ENCODE measurements at regions of chr9 and their contacts with region 1.

Region 1: DNA sequence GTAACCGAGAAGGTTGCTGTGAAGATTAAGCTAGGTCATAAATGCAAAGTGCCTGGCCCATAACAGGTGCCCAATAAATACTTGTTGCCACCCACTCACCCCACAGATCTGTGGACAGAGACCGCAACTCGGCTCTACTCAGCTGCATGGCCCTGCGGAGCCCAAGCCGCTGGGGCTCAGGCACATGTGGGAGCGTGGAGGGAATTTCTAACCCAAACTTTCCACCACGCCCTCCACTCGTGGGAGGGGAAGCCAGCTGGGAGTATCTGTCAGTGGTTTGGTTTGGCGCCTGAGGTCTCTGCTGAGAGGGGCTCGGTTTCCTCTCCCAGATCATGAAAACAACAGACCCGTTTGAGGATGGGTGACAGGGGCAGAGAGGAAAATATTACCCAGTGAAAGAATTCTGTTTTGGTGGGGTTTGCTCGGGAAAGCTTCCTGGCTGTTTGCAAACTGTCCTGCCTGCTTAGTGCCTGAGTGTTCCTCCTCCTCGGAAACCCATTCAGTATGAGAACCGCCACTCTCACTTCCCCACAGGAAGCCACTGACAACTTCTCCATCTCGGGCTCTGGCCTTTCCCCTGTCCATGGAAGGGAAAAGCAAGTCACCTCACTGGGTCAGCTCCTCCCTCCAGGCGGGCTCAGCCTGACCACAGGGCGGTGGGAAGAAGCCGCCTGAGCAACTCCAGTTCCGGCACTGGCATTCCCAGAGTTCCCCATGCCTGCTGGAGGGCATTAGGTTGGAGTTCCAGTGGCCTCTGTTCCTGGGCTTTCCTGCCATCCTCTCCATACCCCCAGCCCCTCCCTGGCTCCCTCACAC is 60.1 kb downstream of the RGS3 start:
- DNase-seq: peak; percentile 55
- H3K4me3 Mint-ChIP-seq: peak overlapping the region; percentile 10
- H3K27ac Mint-ChIP-seq: peak overlapping the region; percentile 13
- H3K4me1 Mint-ChIP-seq: peaks cover 55% of the 10 kb centered on the region
- H3K27me3 Mint-ChIP-seq: no peaks in the 10 kb centered on the region

Region 2: DNA sequence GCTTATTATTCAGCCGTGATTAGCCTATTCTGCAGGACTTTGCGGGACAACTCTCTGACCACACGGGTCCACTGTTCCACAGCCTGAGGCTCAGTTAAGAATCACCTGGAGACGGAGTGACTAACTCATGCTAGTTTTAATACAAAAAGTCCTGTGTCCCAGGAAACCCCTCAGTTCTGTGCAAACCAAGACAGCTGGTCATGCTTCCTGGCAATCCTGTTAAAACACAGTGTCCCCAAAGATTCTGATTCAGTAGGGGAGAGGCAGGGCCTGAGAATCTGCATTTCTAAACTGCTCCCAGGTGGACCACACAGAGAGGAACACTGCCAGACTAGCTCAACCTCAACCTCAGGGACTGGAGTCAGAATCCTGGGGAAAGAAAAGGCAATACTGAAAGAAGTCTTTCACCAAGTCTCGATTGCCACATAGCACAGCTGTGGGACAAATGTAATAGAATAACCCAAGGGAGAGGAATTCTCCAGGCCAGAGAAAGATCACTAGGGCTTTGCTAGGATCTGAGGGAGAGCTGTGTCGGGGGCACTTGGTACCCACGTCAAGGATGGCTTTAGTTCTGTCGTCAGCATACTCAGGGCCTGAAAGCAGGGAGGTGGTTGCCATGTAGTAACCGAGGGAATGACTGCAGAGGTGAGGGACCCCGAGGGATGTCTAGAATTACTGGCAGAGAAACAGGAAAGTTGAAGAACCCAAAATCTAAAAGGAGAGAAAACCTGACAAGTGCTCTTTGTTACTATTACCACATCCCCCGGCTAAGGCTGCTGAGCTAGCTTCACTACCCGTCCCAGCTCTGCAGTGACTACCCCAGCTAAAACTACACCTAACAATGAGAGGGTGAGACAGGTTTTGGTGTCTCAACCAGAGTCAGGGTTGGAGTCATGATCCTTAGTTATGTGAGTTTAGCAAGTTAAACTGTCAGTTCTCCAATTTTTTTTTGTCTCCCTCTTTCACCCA is 1357.2 kb before region 1 on chr9:
- CTCF ChIA-PET with region 1: no interaction called
- intact Hi-C with region 1: no loop called
- DNase-seq: no peak
- H3K4me3 Mint-ChIP-seq: no peak overlapping the region
- H3K27ac Mint-ChIP-seq: no peak overlapping the region
- H3K4me1 Mint-ChIP-seq: peaks cover 22% of the 10 kb centered on the region
- H3K27me3 Mint-ChIP-seq: no peaks in the 10 kb centered on the region

Region 3: GRCh38 chr9:113454914-113455761 is 68.5 kb before region 1 on chr9:
- CTCF ChIA-PET with region 1: no interaction called
- intact Hi-C with region 1: loop called (anchors 2 kb)
- DNase-seq: peak; percentile 31
- H3K4me3 Mint-ChIP-seq: no peak overlapping the region
- H3K27ac Mint-ChIP-seq: no peak overlapping the region
- H3K4me1 Mint-ChIP-seq: peaks cover 4% of the 10 kb centered on the region
- H3K27me3 Mint-ChIP-seq: no peaks in the 10 kb centered on the region

Region 4: DNA sequence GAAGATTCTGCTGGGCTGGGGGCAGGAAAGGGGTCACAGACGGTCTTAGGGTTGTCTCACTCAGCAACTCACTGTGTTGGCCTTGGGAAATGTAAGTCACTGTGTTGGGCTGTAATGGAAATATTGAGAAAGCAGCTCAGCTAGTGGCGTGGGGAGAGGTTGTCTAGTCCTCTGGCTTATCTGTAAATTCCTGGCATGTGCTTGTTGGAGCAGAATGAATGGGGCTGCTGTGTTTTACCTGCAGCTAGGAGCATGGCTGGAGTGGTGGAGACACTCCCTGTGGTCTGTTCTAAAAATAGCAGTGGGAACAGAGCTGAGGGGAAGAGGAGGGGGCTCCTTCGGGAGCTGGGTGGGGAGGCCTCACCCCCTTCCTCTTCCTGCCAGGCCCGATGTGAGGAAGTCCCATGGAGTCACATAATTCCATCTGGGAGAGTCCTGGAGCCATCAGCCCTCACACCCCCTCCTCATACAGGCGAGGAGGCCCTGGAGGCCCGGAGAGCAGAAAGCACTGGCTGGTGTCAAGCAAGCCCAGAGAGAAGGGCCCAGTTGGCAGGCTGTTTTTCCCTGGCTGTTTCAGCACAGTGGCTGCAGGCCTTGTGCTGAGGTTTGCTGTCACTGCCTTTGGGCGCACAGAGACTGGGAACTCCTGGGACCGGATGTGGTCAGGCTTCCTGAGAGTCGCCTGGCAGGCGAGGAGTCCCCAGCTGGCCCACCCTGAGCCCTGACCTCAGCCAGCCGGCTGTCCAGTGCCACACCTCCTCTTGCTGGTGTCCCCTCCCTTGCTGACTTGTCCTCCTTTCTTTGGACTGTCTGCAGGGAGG is 24.8 kb after region 1 on chr9:
- CTCF ChIA-PET with region 1: no interaction called
- intact Hi-C with region 1: loop called (anchors 1 kb)
- DNase-seq: peak; percentile 32
- H3K4me3 Mint-ChIP-seq: no peak overlapping the region
- H3K27ac Mint-ChIP-seq: peak overlapping the region; percentile 87
- H3K4me1 Mint-ChIP-seq: peaks cover 23% of the 10 kb centered on the region
- H3K27me3 Mint-ChIP-seq: no peaks in the 10 kb centered on the region

Region 5: DNA sequence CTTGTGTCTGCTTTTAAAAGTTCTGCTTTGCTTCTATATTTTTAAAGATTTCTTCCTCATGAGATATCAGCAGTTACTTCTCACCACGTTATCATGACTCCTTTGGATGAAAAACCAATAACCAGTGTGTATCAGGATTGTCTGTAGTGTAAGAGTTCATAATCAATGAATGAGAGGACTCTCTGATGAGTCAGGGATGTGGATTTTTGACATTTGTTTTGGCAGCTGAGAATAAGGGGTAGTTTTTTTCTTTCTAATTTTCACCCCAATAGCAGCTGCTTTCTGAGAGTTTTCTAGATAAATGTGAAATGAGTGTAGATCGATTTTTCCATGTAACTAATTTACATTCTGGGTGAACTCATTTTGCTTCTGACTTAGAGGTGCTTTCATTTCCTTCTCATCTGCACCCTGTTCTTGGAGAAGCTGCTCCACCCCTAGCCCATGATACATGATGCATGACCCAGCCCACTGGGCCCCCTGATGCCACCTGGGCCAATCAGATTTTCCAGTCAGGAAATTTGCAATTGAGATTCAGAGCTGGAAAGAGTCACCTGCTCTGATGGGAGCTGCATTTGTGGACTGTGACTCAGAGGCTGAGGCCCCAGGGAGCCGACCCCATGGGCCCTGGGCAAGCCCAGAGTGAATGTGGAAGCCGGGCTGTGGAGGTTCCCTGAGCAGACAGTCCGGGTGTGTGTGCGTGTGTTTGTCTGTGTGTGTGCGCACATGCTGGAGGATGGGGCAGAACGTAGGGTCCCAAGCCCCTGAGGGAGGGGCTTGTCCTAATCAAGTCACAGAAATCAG is 99.2 kb after region 1 on chr9:
- CTCF ChIA-PET with region 1: no interaction called
- intact Hi-C with region 1: loop called (anchors 1 kb)
- DNase-seq: peak; percentile 84
- H3K4me3 Mint-ChIP-seq: peak overlapping the region; percentile 14
- H3K27ac Mint-ChIP-seq: peak overlapping the region; percentile 86
- H3K4me1 Mint-ChIP-seq: peaks cover 34% of the 10 kb centered on the region
- H3K27me3 Mint-ChIP-seq: peaks cover 2% of the 10 kb centered on the region

Measured in activated naive CD4-positive, alpha-beta T cell treated with anti-CD3 and anti-CD28 coated beads for 36 hours (primary cell).